ENCODE measurements at regions of chr6 and their contacts with region 1.

Region 1: DNA sequence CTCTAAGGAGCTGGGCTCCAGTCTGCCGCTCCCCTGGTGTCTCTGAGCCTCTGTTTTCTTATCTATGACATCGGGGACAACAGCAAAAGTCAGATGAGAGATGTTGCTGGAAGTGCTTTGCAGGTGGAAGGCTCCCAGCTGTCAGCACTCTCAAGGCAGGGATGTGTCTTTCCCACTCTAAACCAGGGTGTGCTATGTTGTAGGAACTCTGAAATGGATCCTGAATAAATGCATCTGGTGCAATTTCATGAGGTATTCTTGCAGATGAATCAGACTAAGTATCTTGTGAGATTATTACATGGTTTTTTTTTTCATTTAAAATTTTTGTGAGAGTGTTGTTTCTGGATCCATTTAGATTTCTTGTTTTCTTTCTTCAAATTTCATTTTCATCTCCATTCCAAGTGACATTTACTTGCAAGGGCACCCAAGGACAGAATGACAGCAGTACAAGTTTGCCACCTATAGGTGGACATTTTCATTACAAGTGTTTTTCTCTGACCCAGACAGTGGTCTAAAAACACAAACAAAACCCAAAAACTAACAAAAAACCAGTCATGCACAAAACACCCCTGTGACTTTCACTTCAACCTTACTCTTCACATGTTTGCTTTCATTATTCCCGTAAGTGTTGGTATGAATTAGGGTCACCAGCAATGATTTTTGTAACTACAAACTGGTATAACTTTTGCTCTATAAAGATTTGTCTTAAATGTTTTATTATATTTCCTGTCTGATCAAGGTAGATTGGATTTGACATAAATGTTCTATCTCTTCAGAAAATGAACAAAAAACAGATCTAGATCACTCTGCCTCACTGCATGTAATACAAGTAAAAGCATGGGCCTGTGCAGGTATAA is 14.7 kb upstream of the SIM1 start:
- DNase-seq: peak; percentile 68
- H3K4me3 ChIP-seq: no peak overlapping the region
- H3K27ac ChIP-seq: no peak overlapping the region
- H3K4me1 ChIP-seq: no peaks in the 10 kb centered on the region
- H3K27me3 ChIP-seq: peaks cover 0 to 5% of the 10 kb centered on the region in 2 experiments
- CTCF ChIP-seq: peak; percentile 40 to 55
- POLR2A ChIP-seq: no peak

Region 2: DNA sequence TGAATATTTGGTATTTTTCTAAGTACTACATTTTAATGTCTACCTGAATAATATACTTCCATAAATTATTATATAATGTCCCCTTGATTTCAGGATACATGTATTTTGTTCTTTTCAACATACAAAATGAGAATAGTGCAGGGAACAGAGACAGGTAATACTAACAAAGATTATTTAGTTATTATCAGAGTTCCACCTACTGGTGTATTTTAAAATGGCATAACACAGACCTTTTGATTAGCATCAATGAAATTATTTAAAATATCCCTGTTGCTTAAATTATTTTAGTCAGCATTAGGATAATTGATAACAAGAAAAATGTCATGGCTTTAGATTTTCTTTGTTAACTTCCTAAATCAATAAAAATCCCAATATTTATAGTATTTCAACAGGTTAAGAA is 688.7 kb before region 1 on chr6:
- CTCF ChIA-PET with region 1: no interaction called
- POLR2A ChIA-PET with region 1: no interaction called
- dilution Hi-C with region 1: no loop called
- intact Hi-C with region 1: no loop called
- DNase-seq: no peak
- H3K4me3 ChIP-seq: no peak overlapping the region
- H3K27ac ChIP-seq: no peak overlapping the region
- H3K4me1 ChIP-seq: no peaks in the 10 kb centered on the region
- H3K27me3 ChIP-seq: peaks cover 3 to 5% of the 10 kb centered on the region in 2 experiments
- CTCF ChIP-seq: no peak
- POLR2A ChIP-seq: no peak

Region 3: DNA sequence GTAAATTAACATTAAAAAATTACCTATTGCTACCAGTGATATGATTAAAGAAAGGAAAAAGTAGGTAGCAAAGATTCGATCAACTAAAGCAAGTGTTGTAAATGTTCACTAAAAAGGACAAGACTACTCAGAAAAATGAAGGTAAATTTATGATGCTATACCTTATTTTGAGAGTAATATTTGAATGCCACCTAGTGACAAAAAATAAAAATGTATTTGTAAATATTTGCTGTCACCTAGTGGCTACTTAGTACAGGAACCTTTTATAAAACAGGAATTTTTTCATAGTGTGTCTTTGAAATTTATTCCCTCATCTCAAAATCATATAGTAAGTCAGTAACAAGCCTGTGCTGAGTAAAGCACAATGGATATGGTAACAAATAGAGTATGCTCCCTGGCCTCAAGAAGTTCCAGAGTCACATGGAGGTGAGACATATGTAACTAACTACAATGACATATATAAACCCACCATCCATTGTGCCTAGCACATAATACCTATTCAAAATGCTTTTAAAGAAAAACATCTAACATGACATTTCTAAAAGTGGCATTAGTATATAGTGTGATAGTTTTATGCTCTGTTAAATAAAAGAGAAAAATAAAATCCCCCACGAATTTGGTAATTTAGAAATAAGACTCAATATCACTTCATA is 178.4 kb after region 1 on chr6:
- CTCF ChIA-PET with region 1: interaction called, 5 read pairs
- POLR2A ChIA-PET with region 1: no interaction called
- dilution Hi-C with region 1: no loop called
- intact Hi-C with region 1: loop called (anchors 5 kb)
- DNase-seq: peak; percentile 39
- H3K4me3 ChIP-seq: no peak overlapping the region
- H3K27ac ChIP-seq: no peak overlapping the region
- H3K4me1 ChIP-seq: no peaks in the 10 kb centered on the region
- H3K27me3 ChIP-seq: no peaks in the 10 kb centered on the region
- CTCF ChIP-seq: peak; percentile 22 to 29
- POLR2A ChIP-seq: no peak